MCF 10A (cell line): ENCODE measurements at regions of chr6 and their contacts with region 1.

Region 1: GRCh38 chr6:30926644-30927043 is 5.3 kb downstream of the SFTA2 start:
- DNase-seq: peak; percentile 36
- H3K4me3 Mint-ChIP-seq: peak overlapping the region; percentile 42
- H3K27ac Mint-ChIP-seq: peak overlapping the region; percentile 95
- H3K4me1 Mint-ChIP-seq: peaks cover 45% of the 10 kb centered on the region
- H3K27me3 Mint-ChIP-seq: no peaks in the 10 kb centered on the region
- CTCF ChIP-seq: no peak

Region 2: GRCh38 chr6:30942338-30943060 is 15.9 kb after region 1 on chr6:
- CTCF ChIA-PET with region 1: interaction called, 7 read pairs
- POLR2A ChIA-PET with region 1: interaction called, 14 read pairs
- intact Hi-C with region 1: no loop called
- DNase-seq: peak; percentile 88
- H3K4me3 Mint-ChIP-seq: peak overlapping the region; percentile 54
- H3K27ac Mint-ChIP-seq: peak overlapping the region; percentile 43
- H3K4me1 Mint-ChIP-seq: peaks cover 29% of the 10 kb centered on the region
- H3K27me3 Mint-ChIP-seq: no peaks in the 10 kb centered on the region
- CTCF ChIP-seq: peak; percentile 50

Region 3: DNA sequence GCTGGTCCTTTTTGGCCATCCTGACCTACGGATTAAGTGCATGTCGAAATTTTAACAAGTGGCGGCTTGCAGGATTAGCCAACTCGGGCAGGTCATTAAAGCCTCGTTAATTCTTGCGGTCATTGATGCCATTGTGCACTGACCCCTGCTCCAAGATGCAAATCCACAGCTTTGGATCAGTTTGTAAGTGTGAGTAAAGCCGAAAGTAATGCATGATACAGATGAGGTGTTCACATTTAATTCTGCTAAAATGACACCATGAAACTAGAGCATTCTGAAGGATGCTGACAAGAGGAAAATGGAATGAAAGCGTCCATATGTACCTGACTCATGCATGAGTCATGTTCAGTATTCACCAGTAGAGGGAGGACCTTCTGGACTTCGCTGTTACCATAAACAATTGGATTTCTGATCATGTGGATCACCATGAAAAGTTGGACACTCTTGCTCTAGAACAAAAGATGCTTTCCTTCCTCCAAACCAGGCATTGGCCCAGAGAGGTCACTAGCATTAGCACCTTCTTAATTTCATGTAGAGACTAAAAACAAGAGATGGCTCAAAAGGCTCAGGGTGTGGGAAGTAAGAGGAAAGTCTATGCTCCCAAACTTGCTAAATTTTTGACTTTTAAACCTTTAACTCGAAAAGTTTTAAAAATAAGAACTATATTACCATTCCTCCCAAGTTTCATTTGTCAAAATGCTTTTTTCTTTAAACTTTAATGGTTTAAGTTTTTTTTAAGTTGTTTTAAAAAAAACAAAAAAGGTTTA is 131.7 kb after region 1 on chr6:
- CTCF ChIA-PET with region 1: interaction called, 5 read pairs
- POLR2A ChIA-PET with region 1: interaction called, 12 read pairs
- intact Hi-C with region 1: no loop called
- DNase-seq: peak; percentile 91
- H3K4me3 Mint-ChIP-seq: peak overlapping the region; percentile 19
- H3K27ac Mint-ChIP-seq: peak overlapping the region; percentile 73
- H3K4me1 Mint-ChIP-seq: peaks cover 37% of the 10 kb centered on the region
- H3K27me3 Mint-ChIP-seq: no peaks in the 10 kb centered on the region
- CTCF ChIP-seq: peak; percentile 41